Dendritic cell treated with granulocyte-macrophage colony-stimulating factor and Interleukin-4, amounts not matched to agents 40 ng/mL and 50 ng/mL, for 4 days (primary cell): ENCODE measurements at regions of chr11 and their contacts with region 1.

Region 1: GRCh38 chr11:96303067-96303466 is 39.9 kb downstream of the MAML2 start:
- H3K4me3 Mint-ChIP-seq: no peak overlapping the region
- H3K27ac Mint-ChIP-seq: no peak overlapping the region
- H3K4me1 Mint-ChIP-seq: peaks cover 59% of the 10 kb centered on the region
- H3K27me3 Mint-ChIP-seq: no peaks in the 10 kb centered on the region

Region 2: GRCh38 chr11:95964281-95964680 is 338.8 kb before region 1 on chr11:
- intact Hi-C with region 1: no loop called
- H3K4me3 Mint-ChIP-seq: no peak overlapping the region
- H3K27ac Mint-ChIP-seq: no peak overlapping the region
- H3K4me1 Mint-ChIP-seq: no peaks in the 10 kb centered on the region
- H3K27me3 Mint-ChIP-seq: no peaks in the 10 kb centered on the region

Region 3: DNA sequence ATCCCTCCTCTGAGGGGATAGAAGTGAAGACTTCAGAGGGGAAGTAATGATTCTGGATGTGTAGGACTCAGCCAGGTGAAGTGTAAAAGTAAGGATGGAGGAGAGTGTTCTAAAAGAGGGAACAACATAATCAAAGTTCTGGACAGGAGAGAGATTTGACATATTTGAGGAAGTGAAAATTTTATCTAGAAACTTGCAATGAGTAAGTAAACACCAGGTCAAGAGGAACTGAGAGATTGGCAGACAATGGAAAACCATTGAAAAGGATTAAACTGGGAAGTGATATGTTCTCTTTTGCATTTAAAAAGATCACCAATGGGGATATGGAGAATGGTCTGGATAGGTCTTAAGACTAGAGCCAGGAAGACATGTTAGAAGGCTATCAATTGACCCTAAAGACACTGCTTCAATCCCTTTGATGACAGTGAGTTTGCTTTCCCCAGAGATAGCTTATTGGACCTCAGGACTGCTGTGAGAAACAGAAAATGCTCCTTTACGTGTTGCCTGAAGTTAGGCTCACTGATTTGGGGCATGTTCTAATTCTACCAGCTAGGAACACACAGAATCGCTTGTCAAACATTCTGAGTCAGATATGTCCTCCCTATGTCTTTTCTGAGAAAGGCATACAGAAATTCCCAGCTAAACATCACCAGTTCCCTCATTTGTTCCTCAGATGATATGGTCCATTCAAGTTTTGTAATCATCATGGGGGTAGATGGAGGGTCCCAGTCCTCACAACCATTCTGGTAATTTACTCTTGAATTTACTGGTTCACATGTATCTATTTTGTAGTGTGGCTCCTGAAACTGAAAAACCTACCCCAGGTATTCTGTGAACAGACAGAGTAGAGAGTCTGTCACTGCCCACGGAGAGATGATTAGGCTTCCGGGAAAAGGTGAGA is 105.0 kb before region 1 on chr11:
- intact Hi-C with region 1: no loop called
- H3K4me3 Mint-ChIP-seq: no peak overlapping the region
- H3K27ac Mint-ChIP-seq: no peak overlapping the region
- H3K4me1 Mint-ChIP-seq: peaks cover 38% of the 10 kb centered on the region
- H3K27me3 Mint-ChIP-seq: peaks cover 36% of the 10 kb centered on the region

Region 4: DNA sequence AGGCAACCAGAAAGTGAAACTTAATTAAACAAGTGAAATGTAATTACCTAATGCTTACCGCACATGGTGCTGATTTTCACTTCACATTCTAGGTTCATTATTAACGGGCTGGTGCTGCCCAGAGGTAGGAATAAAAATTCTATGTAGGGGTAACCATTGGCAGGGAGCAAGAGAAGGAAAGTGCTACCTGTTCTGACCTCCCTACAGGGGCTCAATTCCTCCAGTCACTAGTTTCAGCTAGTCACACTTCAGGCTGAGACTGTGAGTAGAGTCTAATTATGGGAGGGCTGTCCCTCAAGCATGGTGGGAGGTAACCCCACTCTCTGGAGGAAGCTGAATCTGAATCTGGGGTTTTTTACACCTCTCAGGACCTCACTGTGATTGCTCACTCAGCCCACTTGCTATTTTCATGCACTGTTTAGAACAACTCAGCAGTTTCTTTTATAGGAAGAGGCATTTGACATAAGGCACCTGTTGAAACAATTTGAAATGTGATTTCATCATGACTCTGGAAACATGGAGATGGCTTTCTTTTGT is 35.5 kb before region 1 on chr11:
- intact Hi-C with region 1: loop called (anchors 5 kb)
- H3K4me3 Mint-ChIP-seq: no peak overlapping the region
- H3K27ac Mint-ChIP-seq: no peak overlapping the region
- H3K4me1 Mint-ChIP-seq: peaks cover 40% of the 10 kb centered on the region
- H3K27me3 Mint-ChIP-seq: peaks cover 1% of the 10 kb centered on the region

Region 5: GRCh38 chr11:96506953-96507354 is 203.9 kb after region 1 on chr11:
- intact Hi-C with region 1: no loop called
- H3K4me3 Mint-ChIP-seq: no peak overlapping the region
- H3K27ac Mint-ChIP-seq: no peak overlapping the region
- H3K4me1 Mint-ChIP-seq: no peaks in the 10 kb centered on the region
- H3K27me3 Mint-ChIP-seq: no peaks in the 10 kb centered on the region